ENCODE measurements at regions of chr16 and their contacts with region 1.

Region 1: GRCh38 chr16:71311553-71312158 is 22.5 kb upstream of the CMTR2 start:
- DNase-seq: peak; percentile 25
- H3K4me3 Mint-ChIP-seq: no peak overlapping the region
- H3K27ac Mint-ChIP-seq: no peak overlapping the region
- H3K4me1 Mint-ChIP-seq: no peaks in the 10 kb centered on the region
- H3K27me3 Mint-ChIP-seq: peaks cover 32% of the 10 kb centered on the region

Region 2: DNA sequence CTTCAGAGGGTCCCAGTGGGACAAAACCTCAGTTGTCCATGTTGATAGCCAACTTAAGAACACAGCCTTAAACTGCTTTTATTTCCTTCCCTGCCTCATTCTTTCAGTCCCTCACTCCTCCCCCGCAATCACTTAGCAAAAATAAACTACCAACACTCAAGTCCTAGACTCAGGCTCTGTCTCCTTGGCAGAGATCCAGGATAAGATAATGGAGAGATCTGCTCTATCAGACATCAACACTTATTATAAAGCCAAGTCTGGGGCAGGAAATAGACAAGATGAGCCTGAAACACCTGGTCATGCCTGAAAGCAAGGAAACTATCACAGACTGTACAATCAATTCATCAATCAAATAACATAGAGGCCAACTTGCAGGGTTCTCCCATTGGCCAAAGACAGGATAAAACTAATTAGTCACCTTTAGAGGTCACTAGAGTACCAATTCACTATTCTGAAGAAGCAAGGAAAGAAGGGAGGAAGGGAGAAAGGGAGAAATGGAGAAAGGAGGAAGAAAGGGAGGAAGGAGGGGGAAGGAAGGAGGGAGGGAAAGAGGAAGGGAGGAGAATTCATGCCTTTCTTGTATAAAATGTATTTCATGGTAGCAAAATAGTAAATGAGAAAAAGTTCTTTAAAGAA is 96.8 kb before region 1 on chr16:
- CTCF ChIA-PET with region 1: interaction called, 10 read pairs
- POLR2A ChIA-PET with region 1: no interaction called
- intact Hi-C with region 1: no loop called
- DNase-seq: no peak
- H3K4me3 Mint-ChIP-seq: no peak overlapping the region
- H3K27ac Mint-ChIP-seq: no peak overlapping the region
- H3K4me1 Mint-ChIP-seq: no peaks in the 10 kb centered on the region
- H3K27me3 Mint-ChIP-seq: peaks cover 4% of the 10 kb centered on the region

Region 3: GRCh38 chr16:71249399-71249798 is 62.3 kb before region 1 on chr16:
- CTCF ChIA-PET with region 1: interaction called, 14 read pairs
- POLR2A ChIA-PET with region 1: no interaction called
- intact Hi-C with region 1: no loop called
- DNase-seq: no peak
- H3K4me3 Mint-ChIP-seq: no peak overlapping the region
- H3K27ac Mint-ChIP-seq: no peak overlapping the region
- H3K4me1 Mint-ChIP-seq: no peaks in the 10 kb centered on the region
- H3K27me3 Mint-ChIP-seq: peaks cover 3% of the 10 kb centered on the region

Region 4: DNA sequence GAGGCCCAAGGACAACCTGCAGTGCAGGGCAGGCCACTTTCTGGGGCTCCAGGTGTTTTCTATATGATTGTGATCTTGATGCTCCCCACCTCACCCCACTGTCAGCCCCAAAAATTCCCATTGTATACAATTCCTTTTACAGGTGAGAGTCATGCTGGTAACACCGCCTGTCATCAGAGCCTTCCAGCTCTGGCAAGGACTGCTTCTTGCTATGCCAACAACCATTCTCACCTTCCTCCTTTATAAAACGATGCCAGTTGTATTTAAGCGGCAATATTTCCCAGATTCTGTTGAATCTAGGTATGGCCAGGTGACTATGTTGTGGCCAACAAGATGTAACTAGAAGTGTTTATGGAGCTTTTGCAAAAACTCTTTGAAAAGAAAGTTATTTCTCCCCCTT is 16.5 kb after region 1 on chr16:
- CTCF ChIA-PET with region 1: interaction called, 24 read pairs
- POLR2A ChIA-PET with region 1: no interaction called
- intact Hi-C with region 1: no loop called
- DNase-seq: no peak
- H3K4me3 Mint-ChIP-seq: no peak overlapping the region
- H3K27ac Mint-ChIP-seq: no peak overlapping the region
- H3K4me1 Mint-ChIP-seq: no peaks in the 10 kb centered on the region
- H3K27me3 Mint-ChIP-seq: peaks cover 11% of the 10 kb centered on the region

Region 5: DNA sequence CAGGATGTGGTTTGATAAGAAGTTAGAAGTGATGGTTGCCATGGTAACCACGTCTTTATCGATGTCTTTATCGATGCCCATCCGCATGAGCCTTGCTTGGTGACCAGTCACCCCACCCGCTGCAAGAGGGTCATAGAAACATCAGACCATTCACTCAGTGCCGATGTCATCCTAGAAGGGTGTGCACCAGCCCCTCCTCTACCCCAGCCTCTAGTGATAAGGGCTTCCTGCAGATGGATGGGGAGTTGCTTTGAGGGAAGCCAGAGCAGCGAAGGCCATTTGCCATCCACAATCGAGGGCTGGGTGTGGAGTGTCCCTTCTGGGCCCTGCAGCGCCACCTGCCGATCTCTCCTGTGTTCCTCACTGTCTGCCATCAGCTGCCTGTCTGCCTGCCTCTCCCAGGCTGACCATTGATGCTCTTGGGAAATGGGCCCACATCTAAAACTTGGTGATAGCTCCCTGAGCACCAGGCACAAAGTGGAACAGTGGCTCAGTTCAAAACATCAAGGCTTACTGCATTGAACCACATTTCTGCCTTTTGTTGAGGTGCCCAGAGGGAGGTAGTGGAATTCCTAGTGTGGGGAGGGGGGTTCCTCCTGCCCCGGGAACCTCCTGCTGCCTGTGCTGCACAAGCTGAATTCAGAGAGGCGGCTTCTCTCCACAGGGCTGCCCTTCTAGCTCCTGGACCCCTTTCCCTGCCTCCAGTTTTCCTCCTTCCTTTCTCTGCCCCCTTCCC is 55.8 kb after region 1 on chr16:
- CTCF ChIA-PET with region 1: no interaction called
- POLR2A ChIA-PET with region 1: no interaction called
- intact Hi-C with region 1: no loop called
- DNase-seq: peak; percentile 59
- H3K4me3 Mint-ChIP-seq: no peak overlapping the region
- H3K27ac Mint-ChIP-seq: no peak overlapping the region
- H3K4me1 Mint-ChIP-seq: no peaks in the 10 kb centered on the region
- H3K27me3 Mint-ChIP-seq: peaks cover 15% of the 10 kb centered on the region

Measured in activated CD4-positive, alpha-beta memory T cell treated with anti-CD3 and anti-CD28 coated beads for 36 hours (primary cell).